ENCODE measurements at regions of chr4 and their contacts with region 1.

Region 1: GRCh38 chr4:70522576-70522975 is 4.2 kb downstream of the AMTN start:
- DNase-seq: no peak
- ATAC-seq: no peak
- H3K4me3 ChIP-seq: no peak overlapping the region
- H3K4me3 Mint-ChIP-seq: no peak overlapping the region
- H3K27ac ChIP-seq: no peak overlapping the region
- H3K27ac Mint-ChIP-seq: no peak overlapping the region
- H3K4me1 ChIP-seq: no peaks in the 10 kb centered on the region
- H3K4me1 Mint-ChIP-seq: no peaks in the 10 kb centered on the region
- H3K27me3 ChIP-seq: no peaks in the 10 kb centered on the region
- H3K27me3 Mint-ChIP-seq: peaks cover 2 to 15% (median 7%) of the 10 kb centered on the region in 5 donors

Region 2: GRCh38 chr4:70488748-70489147 is 33.8 kb before region 1 on chr4:
- CTCF ChIA-PET with region 1: no interaction called
- POLR2A ChIA-PET with region 1: no interaction called
- intact Hi-C with region 1: loop called in 1 of 2 experiments (anchors 1 kb)
- DNase-seq: no peak
- ATAC-seq: no peak
- H3K4me3 ChIP-seq: no peak overlapping the region
- H3K4me3 Mint-ChIP-seq: no peak overlapping the region
- H3K27ac ChIP-seq: no peak overlapping the region
- H3K27ac Mint-ChIP-seq: no peak overlapping the region
- H3K4me1 ChIP-seq: no peaks in the 10 kb centered on the region
- H3K4me1 Mint-ChIP-seq: no peaks in the 10 kb centered on the region
- H3K27me3 ChIP-seq: no peaks in the 10 kb centered on the region
- H3K27me3 Mint-ChIP-seq: peaks cover 0 to 16% (median 4%) of the 10 kb centered on the region in 5 donors

Region 3: GRCh38 chr4:71198958-71199357 is 676.4 kb after region 1 on chr4:
- CTCF ChIA-PET with region 1: no interaction called
- POLR2A ChIA-PET with region 1: no interaction called
- intact Hi-C with region 1: no loop called
- DNase-seq: peak in 1 of 9 donors; percentile 5
- ATAC-seq: peak; percentile 72
- H3K4me3 ChIP-seq: no peak overlapping the region
- H3K4me3 Mint-ChIP-seq: peak overlapping the region in 1 of 10 donors; percentile 41
- H3K27ac ChIP-seq: no peak overlapping the region
- H3K27ac Mint-ChIP-seq: no peak overlapping the region
- H3K4me1 ChIP-seq: peaks cover 4 to 11% of the 10 kb centered on the region in 2 donors
- H3K4me1 Mint-ChIP-seq: peaks cover 5 to 13% (median 11%) of the 10 kb centered on the region in 7 donors
- H3K27me3 ChIP-seq: no peaks in the 10 kb centered on the region
- H3K27me3 Mint-ChIP-seq: peaks cover 7 to 29% (median 12%) of the 10 kb centered on the region in 5 donors